B cell (primary cell): ENCODE measurements at regions of chr6 and their contacts with region 1.

Region 1: DNA sequence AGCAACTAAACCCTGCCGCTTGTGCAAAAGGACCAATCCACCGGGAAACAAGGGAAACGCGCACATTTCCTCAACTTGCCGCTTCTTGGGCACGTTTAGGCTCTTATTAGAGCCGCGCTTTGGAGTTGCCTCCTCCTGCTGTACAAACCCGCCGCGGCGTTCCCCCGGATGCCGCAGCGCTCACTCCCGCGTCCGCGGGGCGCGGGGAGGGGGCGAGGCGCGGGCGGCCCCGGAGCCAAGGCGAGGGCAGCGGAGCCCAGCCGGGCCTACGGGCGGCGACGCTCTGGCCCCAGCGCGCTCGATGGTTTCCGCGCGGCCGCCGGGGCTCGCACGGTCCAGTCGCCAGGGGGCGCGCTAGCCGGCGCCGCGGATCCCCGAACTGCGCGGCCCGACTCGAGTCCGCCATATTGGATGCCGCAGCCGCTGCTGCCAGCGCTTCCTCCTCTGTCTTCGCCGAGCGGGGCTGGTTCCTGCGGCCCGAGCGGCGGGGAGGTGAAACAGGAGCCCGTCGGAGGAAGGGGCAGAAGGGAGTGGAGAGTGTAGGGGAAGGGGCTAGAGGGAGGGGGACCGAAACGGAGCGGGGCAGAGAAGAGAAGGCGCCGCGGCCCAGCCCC is at the start of gene SCAF8:
- DNase-seq: peak; percentile 94
- ATAC-seq: peak; percentile 74
- H3K4me3 ChIP-seq: peak within 1 kb of the TSS; percentile 78 to 97 (median 91)
- H3K4me3 Mint-ChIP-seq: peak within 1 kb of the TSS; percentile 92
- H3K27ac ChIP-seq: peak within 1 kb of the TSS; percentile 96 to 97
- H3K27ac Mint-ChIP-seq: peak within 1 kb of the TSS; percentile 99
- H3K4me1 ChIP-seq: peaks cover 31% of the 10 kb centered on the region in 2 donors
- H3K4me1 Mint-ChIP-seq: peaks cover 38% of the 10 kb centered on the region
- H3K27me3 ChIP-seq: no peaks in the 10 kb centered on the region
- H3K27me3 Mint-ChIP-seq: no peaks in the 10 kb centered on the region
- CTCF ChIP-seq: peak; percentile 83
- total RNA-seq, gene SCAF8: 75.2 and 77.9 TPM in 2 replicates

Region 2: DNA sequence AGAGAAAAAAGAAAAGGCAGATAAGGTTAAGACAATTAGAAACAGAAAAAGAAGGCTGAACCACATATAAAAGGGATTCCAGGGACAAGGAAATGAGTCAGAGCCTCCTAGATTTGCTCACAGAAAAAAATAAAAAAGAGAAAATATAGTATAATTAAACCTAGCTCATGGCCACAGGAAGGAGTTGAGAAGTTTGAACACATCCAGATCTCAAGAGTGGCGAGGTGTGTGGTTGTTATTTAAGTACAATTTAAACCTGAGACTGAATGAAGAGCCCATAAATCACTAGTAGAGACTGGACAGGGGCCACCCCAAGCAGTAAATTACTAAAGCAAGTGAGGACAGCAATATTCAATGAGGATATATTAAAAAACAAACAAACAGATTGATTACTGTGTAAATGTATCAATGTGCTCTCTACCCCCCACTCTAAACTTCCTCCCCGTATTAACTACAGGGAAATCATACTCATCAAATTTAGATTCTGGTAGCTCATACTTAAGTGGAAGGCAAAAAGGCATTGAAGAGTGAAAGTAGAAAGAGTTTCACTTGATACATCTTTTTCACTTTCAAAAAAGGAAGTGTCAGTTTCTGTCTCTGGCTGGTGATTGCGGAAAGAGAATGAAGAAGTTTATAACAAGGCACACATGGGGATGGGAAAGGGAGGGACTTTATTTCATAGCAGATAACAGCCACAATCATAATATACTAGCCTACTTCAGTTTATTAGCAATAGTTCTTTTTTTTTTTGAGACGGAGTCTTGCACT is 49.2 kb before region 1 on chr6:
- CTCF ChIA-PET with region 1: no interaction called
- POLR2A ChIA-PET with region 1: no interaction called
- intact Hi-C with region 1: loop called (anchors 2 kb)
- DNase-seq: peak; percentile 78
- ATAC-seq: peak; percentile 88
- H3K4me3 ChIP-seq: peak overlapping the region in 1 of 5 experiments; percentile 31
- H3K4me3 Mint-ChIP-seq: peak overlapping the region; percentile 20
- H3K27ac ChIP-seq: peak overlapping the region; percentile 52 to 76
- H3K27ac Mint-ChIP-seq: peak overlapping the region; percentile 50
- H3K4me1 ChIP-seq: peaks cover 19 to 38% of the 10 kb centered on the region in 2 donors
- H3K4me1 Mint-ChIP-seq: peaks cover 32% of the 10 kb centered on the region
- H3K27me3 ChIP-seq: no peaks in the 10 kb centered on the region
- H3K27me3 Mint-ChIP-seq: no peaks in the 10 kb centered on the region
- CTCF ChIP-seq: no peak

Region 3: DNA sequence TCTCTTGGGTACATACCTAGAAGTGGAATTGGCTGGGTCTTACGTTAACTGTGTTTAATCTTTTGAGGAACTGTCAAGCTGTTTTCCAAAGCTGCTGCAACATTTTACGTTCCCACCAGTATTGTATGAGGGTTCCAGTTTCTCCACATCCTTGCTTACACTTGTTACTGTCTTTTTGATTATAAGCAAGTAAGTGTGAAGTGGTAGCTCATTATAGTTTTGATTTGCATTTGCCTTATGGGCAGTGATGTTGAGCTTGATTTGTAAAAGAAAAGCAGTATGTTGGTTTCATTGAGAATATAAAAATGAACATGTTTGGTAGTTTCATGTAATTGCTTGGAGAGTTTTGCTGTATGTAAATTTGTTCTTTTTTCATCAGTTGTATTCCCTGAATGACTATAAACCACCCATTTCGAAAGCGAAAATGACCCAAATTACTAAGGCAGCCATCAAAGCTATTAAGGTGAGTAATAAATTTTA is 40.5 kb after region 1 on chr6:
- CTCF ChIA-PET with region 1: no interaction called
- POLR2A ChIA-PET with region 1: no interaction called
- intact Hi-C with region 1: loop called (anchors 5 kb)
- DNase-seq: no peak
- ATAC-seq: no peak
- H3K4me3 ChIP-seq: no peak overlapping the region
- H3K4me3 Mint-ChIP-seq: peak overlapping the region; percentile 23
- H3K27ac ChIP-seq: peak overlapping the region in 1 of 2 donors; percentile 38
- H3K27ac Mint-ChIP-seq: peak overlapping the region; percentile 56
- H3K4me1 ChIP-seq: peaks cover 0 to 5% of the 10 kb centered on the region in 2 donors
- H3K4me1 Mint-ChIP-seq: peaks cover 42% of the 10 kb centered on the region
- H3K27me3 ChIP-seq: no peaks in the 10 kb centered on the region
- H3K27me3 Mint-ChIP-seq: no peaks in the 10 kb centered on the region
- CTCF ChIP-seq: no peak

Region 4: DNA sequence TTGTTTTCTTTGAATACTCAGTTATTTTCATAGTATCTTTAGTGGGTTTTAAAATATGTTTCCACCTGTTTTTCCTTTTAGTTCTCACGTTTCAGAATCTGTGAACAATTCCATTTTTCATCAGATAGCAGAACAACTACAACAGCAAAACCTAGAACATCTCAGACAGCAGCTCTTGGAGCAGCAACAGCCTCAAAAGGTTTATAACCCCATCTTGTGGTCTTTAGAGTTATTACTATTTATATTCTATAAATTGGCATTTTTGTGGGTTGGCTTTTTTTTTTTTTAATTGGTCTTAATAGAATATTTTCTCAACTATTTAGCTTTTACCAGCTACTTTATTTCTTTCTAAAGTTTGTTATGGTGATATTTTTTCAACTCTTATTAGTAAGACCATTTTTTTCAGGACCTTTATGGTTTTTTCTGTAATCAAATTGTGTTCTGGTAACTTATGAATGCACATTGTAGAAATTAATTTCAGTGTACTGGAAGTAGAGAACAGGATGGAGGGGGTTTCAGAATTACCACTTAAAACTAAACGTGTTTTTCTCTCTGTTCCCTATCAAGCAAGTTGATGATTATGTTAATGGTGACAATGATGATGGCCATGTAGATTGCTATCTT is 72.3 kb after region 1 on chr6:
- CTCF ChIA-PET with region 1: interaction called, 6 read pairs
- POLR2A ChIA-PET with region 1: no interaction called
- intact Hi-C with region 1: loop called (anchors 1 kb)
- DNase-seq: peak; percentile 57
- ATAC-seq: peak; percentile 49
- H3K4me3 ChIP-seq: no peak overlapping the region
- H3K4me3 Mint-ChIP-seq: no peak overlapping the region
- H3K27ac ChIP-seq: no peak overlapping the region
- H3K27ac Mint-ChIP-seq: no peak overlapping the region
- H3K4me1 ChIP-seq: peaks cover under 1 to 1% of the 10 kb centered on the region in 2 donors
- H3K4me1 Mint-ChIP-seq: peaks cover 4% of the 10 kb centered on the region
- H3K27me3 ChIP-seq: no peaks in the 10 kb centered on the region
- H3K27me3 Mint-ChIP-seq: no peaks in the 10 kb centered on the region
- CTCF ChIP-seq: peak; percentile 77

Region 5: DNA sequence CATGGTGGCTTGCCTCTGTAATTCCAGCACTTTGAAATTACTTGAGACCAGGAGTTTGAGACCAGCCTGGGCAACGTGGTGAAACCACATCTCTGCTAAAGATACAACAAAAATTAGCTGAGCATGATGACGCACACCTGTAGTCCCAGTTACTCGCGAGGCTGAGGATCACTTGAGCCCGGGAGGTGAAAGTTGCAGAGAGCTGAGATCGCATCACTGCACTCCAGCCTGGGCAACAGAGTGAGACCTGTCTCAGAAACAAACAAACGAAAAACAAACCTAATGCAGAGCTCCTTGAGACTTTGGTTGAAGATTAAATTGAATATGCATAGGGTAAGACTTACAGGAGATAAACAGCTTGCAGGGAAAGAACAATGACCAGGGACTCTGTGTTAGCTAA is 80.9 kb after region 1 on chr6:
- CTCF ChIA-PET with region 1: no interaction called
- POLR2A ChIA-PET with region 1: interaction called, 3 read pairs
- intact Hi-C with region 1: loop called (anchors 2 kb)
- DNase-seq: peak; percentile 38
- ATAC-seq: peak; percentile 50
- H3K4me3 ChIP-seq: no peak overlapping the region
- H3K4me3 Mint-ChIP-seq: peak overlapping the region; percentile 62
- H3K27ac ChIP-seq: peak overlapping the region; percentile 28 to 49
- H3K27ac Mint-ChIP-seq: peak overlapping the region; percentile 82
- H3K4me1 ChIP-seq: peaks cover 22 to 25% of the 10 kb centered on the region in 2 donors
- H3K4me1 Mint-ChIP-seq: peaks cover 39% of the 10 kb centered on the region
- H3K27me3 ChIP-seq: no peaks in the 10 kb centered on the region
- H3K27me3 Mint-ChIP-seq: no peaks in the 10 kb centered on the region
- CTCF ChIP-seq: no peak

Region 6: DNA sequence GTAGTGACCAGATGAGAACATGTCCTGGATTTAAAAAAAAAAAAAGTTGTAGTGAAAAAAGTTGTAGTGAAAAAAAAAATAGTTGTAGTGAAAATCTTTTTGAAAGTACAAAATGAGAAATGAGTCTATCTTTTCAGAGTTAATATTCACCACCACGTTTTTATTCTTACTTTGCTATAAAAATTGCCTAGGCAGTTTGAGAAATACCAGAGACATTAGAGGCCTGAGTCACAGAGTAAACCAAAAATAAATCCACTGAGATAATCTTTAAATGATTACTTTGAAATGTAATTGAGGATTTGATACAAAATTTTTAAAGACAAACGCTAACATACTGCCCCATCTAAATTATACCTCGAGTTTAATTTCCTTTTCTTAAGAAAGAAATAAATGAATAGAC is 160.8 kb after region 1 on chr6:
- CTCF ChIA-PET with region 1: no interaction called
- POLR2A ChIA-PET with region 1: no interaction called
- intact Hi-C with region 1: no loop called
- DNase-seq: no peak
- ATAC-seq: no peak
- H3K4me3 ChIP-seq: no peak overlapping the region
- H3K4me3 Mint-ChIP-seq: no peak overlapping the region
- H3K27ac ChIP-seq: no peak overlapping the region
- H3K27ac Mint-ChIP-seq: no peak overlapping the region
- H3K4me1 ChIP-seq: no peaks in the 10 kb centered on the region
- H3K4me1 Mint-ChIP-seq: no peaks in the 10 kb centered on the region
- H3K27me3 ChIP-seq: no peaks in the 10 kb centered on the region
- H3K27me3 Mint-ChIP-seq: no peaks in the 10 kb centered on the region
- CTCF ChIP-seq: no peak

Region 7: DNA sequence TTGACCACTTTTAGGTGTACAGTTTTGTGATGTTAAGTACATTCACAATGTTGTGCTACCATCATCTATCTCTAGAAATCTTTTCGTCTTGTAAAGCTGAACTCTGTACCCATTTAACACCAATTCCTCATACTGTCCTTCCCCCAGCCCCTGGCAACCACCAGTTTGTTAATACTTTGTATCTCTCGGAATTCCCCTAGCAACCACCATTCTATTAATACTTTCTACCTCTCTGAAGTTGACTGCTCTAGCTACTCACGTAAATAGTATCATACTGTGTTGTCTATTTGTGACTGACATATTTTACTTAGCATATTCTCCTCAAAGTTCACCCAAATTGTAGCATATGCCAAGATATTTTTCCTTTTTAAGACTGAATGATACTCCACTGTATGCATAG is 448.4 kb after region 1 on chr6:
- CTCF ChIA-PET with region 1: no interaction called
- POLR2A ChIA-PET with region 1: no interaction called
- intact Hi-C with region 1: loop called (anchors 5 kb)
- DNase-seq: peak; percentile 72
- ATAC-seq: peak; percentile 61
- H3K4me3 ChIP-seq: peak overlapping the region in 1 of 5 experiments; percentile 4
- H3K4me3 Mint-ChIP-seq: peak overlapping the region; percentile 53
- H3K27ac ChIP-seq: peak overlapping the region; percentile 77 to 80
- H3K27ac Mint-ChIP-seq: peak overlapping the region; percentile 76
- H3K4me1 ChIP-seq: peaks cover 26 to 36% of the 10 kb centered on the region in 2 donors
- H3K4me1 Mint-ChIP-seq: peaks cover 41% of the 10 kb centered on the region
- H3K27me3 ChIP-seq: no peaks in the 10 kb centered on the region
- H3K27me3 Mint-ChIP-seq: no peaks in the 10 kb centered on the region
- CTCF ChIP-seq: no peak